Activated CD8-positive, alpha-beta memory T cell treated with anti-CD3 and anti-CD28 coated beads, Interleukin-2, amount 10 ng/mL, durations not matched to agents 7 days and 5 days (primary cell): ENCODE measurements at regions of chr5 and their contacts with region 1.

Region 1: GRCh38 chr5:157575381-157576020 is at the start of gene ADAM19:
- DNase-seq: peak; percentile 74
- ATAC-seq: peak; percentile 77
- H3K4me3 Mint-ChIP-seq: peak within 1 kb of the TSS; percentile 99
- H3K27ac Mint-ChIP-seq: peak within 1 kb of the TSS; percentile 90
- H3K4me1 Mint-ChIP-seq: peaks cover 52% of the 10 kb centered on the region
- H3K27me3 Mint-ChIP-seq: no peaks in the 10 kb centered on the region
- total RNA-seq, gene ADAM19: 219 to 341 TPM

Region 2: DNA sequence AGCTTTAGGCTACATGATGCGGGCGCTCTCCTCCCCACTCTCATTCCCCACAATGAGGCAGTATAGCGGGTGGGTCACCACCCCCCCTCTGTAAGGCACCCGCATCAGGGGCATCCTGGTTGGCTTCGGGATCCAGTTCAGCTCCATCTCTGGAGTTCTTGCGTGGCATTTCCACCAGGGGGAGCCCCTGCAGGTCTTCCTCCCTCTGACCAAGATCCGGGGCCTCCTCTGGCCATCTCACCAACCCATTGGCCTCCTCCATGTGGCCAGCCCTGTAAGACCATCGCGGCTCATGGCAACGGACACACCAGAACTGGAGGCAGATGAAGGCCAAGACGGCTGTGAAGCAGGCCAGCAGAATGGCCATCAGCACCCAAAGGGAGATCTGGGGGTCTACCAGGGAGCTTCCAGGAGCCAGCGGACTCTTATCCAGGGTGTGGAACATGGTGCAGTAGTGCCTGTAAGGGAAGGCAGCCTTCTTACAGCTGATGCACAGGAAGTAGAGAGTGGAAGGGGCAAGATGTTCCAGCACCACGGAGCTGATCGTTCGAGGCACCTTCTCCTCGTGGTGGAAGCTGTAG is 232.6 kb before region 1 on chr5:
- CTCF ChIA-PET with region 1: no interaction called
- DNase-seq: peak; percentile 52
- ATAC-seq: peak; percentile 34
- H3K4me3 Mint-ChIP-seq: no peak overlapping the region
- H3K27ac Mint-ChIP-seq: no peak overlapping the region
- H3K4me1 Mint-ChIP-seq: peaks cover 52% of the 10 kb centered on the region
- H3K27me3 Mint-ChIP-seq: no peaks in the 10 kb centered on the region

Region 3: DNA sequence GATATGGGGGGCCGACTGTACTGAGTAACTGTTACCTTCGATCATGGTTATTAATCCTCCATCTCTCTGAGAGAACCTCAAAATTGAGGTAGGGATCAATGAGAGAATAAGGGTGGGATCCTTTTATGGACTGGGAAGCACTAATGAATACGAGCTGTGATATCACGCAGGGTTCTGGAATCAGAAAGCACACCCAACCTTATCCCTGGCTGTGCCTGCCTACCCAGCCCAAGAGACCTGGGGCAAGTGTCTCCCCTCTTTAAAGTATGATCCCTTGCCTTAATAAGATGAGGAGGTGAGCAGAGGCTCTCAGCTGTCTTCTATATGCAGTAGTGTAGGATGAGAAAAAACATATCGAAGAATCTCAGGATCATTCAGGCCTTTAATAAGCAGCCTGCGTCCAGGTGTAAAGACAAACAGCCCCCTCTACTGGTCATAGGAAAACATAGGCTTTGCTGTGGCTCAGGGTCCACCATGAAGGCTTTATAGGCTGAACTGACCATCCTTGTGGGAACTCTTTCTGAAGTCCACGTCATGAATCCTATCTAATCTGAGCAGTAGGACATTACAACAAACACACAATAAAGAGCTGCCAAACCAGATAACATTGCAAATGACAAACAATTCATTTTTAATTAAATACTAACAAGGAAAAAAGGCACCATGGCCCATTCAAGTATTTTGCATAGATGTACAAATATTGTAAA is 98.6 kb before region 1 on chr5:
- CTCF ChIA-PET with region 1: no interaction called
- DNase-seq: no peak
- ATAC-seq: peak; percentile 62
- H3K4me3 Mint-ChIP-seq: no peak overlapping the region
- H3K27ac Mint-ChIP-seq: no peak overlapping the region
- H3K4me1 Mint-ChIP-seq: peaks cover 31% of the 10 kb centered on the region
- H3K27me3 Mint-ChIP-seq: no peaks in the 10 kb centered on the region

Region 4: GRCh38 chr5:157540707-157541446 is 34.6 kb before region 1 on chr5:
- CTCF ChIA-PET with region 1: interaction called, 12 read pairs
- DNase-seq: peak; percentile 80
- ATAC-seq: peak; percentile 80
- H3K4me3 Mint-ChIP-seq: peak overlapping the region; percentile 68
- H3K27ac Mint-ChIP-seq: peak overlapping the region; percentile 95
- H3K4me1 Mint-ChIP-seq: peaks cover 93% of the 10 kb centered on the region
- H3K27me3 Mint-ChIP-seq: no peaks in the 10 kb centered on the region

Region 5: GRCh38 chr5:157596487-157596886 is 21.0 kb after region 1 on chr5:
- CTCF ChIA-PET with region 1: interaction called, 10 read pairs
- DNase-seq: peak; percentile 83
- ATAC-seq: peak; percentile 71
- H3K4me3 Mint-ChIP-seq: peak overlapping the region; percentile 40
- H3K27ac Mint-ChIP-seq: peak overlapping the region; percentile 84
- H3K4me1 Mint-ChIP-seq: peaks cover 97% of the 10 kb centered on the region
- H3K27me3 Mint-ChIP-seq: no peaks in the 10 kb centered on the region

Region 6: DNA sequence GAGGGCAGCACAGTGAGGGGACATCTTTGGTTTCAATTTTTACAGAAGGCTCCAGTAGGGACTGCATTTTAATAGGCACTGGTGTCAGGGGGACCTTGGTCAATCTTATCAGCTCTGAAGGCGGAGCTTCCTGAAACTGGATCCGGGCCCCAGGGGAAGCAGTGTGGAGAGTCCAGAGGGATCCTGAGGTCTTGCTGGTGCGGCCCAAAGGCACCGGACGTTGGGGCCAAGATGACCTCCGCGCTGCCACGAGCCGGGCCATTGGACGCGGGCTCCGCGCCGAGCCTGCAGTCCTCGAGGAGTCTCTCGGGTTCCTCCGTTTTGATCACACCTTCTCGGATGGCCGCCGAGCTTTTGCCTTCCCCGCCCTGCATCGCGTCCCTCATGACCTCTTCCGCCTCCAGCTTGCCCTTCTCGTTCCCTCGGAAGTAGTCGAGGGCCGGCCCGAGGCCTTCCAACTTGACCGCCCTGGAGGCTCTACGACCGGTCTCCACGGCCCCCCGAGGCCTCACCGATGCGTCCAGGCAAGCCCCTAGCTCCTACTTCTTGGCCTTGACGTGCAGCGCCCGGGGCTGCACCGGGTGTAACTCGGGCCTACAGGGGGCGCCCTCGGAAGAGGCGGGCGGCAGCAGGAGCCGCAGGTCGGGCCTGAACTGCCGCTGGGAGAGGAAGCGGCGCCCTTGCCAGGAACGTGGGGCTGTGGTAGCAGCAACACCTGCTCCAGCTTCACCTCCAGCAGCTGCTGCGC is 114.6 kb after region 1 on chr5:
- CTCF ChIA-PET with region 1: no interaction called
- DNase-seq: peak; percentile 44
- ATAC-seq: peak; percentile 27
- H3K4me3 Mint-ChIP-seq: no peak overlapping the region
- H3K27ac Mint-ChIP-seq: no peak overlapping the region
- H3K4me1 Mint-ChIP-seq: peaks cover 3% of the 10 kb centered on the region
- H3K27me3 Mint-ChIP-seq: no peaks in the 10 kb centered on the region